K562 (cell line): ENCODE measurements at regions of chr12 and their contacts with region 1.

Region 1: DNA sequence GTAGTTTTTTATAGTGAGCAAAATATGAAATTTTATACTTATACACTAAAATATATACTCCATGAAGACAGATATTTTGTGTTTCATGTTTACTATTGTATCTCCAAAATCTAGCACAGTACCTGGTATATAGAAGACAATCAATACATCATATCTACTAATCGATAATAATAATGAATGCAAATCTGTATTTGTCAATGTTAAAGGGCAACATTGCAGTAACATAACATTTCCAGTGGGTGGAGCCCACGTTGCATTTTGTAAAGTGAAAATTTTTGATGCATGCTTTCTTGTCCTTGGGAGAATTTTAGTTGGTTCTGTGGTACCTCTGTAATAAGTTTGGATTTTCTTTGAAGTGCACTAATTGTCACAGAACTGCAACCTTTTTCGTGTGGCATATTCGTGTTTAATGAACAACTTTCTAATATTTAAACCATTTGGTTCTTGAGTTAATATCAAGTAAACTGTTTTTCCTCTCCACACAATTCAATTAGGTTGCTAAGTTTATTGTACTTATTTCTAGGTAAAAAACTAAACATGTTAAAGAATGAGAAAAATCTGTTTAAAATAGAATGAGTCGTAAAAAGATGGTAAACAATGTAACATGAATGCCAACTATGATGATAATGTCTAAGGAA is 47.4 kb downstream of the AVPR1A start:
- DNase-seq: peak; percentile 9 to 35 (median 23)
- ATAC-seq: no peak
- H3K4me3 ChIP-seq: no peak overlapping the region
- H3K27ac ChIP-seq: no peak overlapping the region
- H3K4me1 ChIP-seq: no peaks in the 10 kb centered on the region
- H3K27me3 ChIP-seq: peaks cover 0 to 5% of the 10 kb centered on the region in 2 experiments; a peak in 1 of 5 replicates
- CTCF ChIP-seq: peak; percentile 50 to 78 (median 67)
- EP300 ChIP-seq: no peak
- POLR2A ChIP-seq: no peak
- RAD21 ChIP-seq: peak; percentile 83 to 86

Region 2: GRCh38 chr12:63079791-63080502 is 23.7 kb before region 1 on chr12:
- CTCF ChIA-PET with region 1: no interaction called
- POLR2A ChIA-PET with region 1: no interaction called
- in situ Hi-C with region 1: no loop called
- intact Hi-C with region 1: no loop called
- DNase-seq: no peak
- ATAC-seq: no peak
- H3K4me3 ChIP-seq: no peak overlapping the region
- H3K27ac ChIP-seq: no peak overlapping the region
- H3K4me1 ChIP-seq: no peaks in the 10 kb centered on the region
- H3K27me3 ChIP-seq: no peaks in the 10 kb centered on the region; a peak in 1 of 5 replicates
- CTCF ChIP-seq: no peak
- EP300 ChIP-seq: no peak
- POLR2A ChIP-seq: no peak
- RAD21 ChIP-seq: no peak

Region 3: GRCh38 chr12:63151623-63152320 is 48.2 kb after region 1 on chr12:
- CTCF ChIA-PET with region 1: no interaction called
- POLR2A ChIA-PET with region 1: no interaction called
- in situ Hi-C with region 1: no loop called
- intact Hi-C with region 1: loop called (anchors 5 kb)
- DNase-seq: peak; percentile 15 to 41 (median 25)
- ATAC-seq: peak; percentile 89
- H3K4me3 ChIP-seq: no peak overlapping the region
- H3K27ac ChIP-seq: no peak overlapping the region
- H3K4me1 ChIP-seq: no peaks in the 10 kb centered on the region
- H3K27me3 ChIP-seq: peaks cover 4 to 26% of the 10 kb centered on the region in 2 experiments; a peak in 4 of 5 replicates
- CTCF ChIP-seq: peak; percentile 45 to 62 (median 52)
- EP300 ChIP-seq: no peak
- POLR2A ChIP-seq: no peak
- RAD21 ChIP-seq: no peak

Region 4: DNA sequence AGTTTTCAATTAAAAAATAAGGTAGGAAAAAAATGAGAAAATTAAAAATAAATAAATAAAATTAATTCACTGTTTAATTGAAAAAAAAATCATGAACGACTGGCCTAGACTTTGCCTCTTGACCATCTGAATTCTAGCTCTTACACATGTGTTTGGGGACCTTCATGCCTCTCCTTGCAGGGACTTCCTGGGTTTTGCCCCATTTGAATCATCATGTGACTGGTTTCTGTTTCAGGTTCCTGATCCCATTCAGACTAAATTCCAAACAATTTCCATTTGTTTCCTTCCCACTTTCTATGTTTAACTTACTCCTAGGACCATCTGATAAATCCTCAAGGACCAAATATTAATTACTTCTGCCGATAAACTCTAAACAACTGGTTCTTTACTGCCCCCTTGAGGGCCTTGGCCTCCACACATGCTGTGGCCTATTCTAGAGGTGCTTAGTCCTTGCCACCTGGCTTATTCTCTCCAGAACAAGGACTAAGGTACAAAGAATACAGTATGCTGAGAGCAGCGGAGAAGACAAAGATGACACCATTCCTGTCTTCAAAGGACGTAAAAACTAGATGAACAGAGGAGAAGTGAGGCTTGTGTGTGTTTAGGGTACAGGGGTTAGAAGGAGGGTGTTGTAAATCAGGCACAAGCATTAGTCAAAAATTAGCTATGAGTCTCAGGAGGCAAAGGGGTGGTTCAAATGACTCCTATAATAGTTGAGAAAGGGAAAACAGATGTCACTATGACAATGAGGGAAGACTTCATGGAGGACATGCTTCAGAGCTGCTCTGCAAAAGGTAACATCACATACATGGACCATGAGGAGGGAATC is 173.1 kb after region 1 on chr12:
- CTCF ChIA-PET with region 1: interaction called, 3 read pairs
- POLR2A ChIA-PET with region 1: no interaction called
- in situ Hi-C with region 1: no loop called
- intact Hi-C with region 1: loop called (anchors 1 kb)
- DNase-seq: peak; percentile 10 to 38 (median 12)
- ATAC-seq: peak; percentile 84
- H3K4me3 ChIP-seq: no peak overlapping the region
- H3K27ac ChIP-seq: no peak overlapping the region
- H3K4me1 ChIP-seq: no peaks in the 10 kb centered on the region
- H3K27me3 ChIP-seq: no peaks in the 10 kb centered on the region
- CTCF ChIP-seq: peak; percentile 34 to 62 (median 54); a peak in 5 of 6 replicates
- EP300 ChIP-seq: no peak
- POLR2A ChIP-seq: no peak
- RAD21 ChIP-seq: peak in 1 of 2 experiments; percentile 45; a peak in 3 of 4 replicates

Region 5: DNA sequence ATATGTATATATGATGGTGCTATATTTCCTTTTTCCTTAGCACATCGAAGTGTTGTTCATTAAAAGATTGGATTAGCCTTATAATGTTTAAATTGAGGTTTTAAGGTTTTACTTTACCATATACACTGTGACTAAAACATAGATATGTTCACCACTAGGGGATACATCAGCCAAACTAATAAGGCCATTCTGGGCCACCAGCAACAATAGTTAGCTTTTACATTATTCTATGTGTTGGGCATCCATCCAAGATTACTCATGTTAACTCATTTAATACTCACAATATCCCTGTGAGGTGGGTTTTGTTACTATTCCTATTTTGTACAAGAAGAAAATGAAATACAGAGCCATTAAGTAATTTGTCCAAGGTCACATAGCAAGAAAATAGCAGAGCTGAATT is 249.9 kb after region 1 on chr12:
- CTCF ChIA-PET with region 1: no interaction called
- POLR2A ChIA-PET with region 1: no interaction called
- in situ Hi-C with region 1: no loop called
- intact Hi-C with region 1: no loop called
- DNase-seq: no peak
- ATAC-seq: no peak
- H3K4me3 ChIP-seq: no peak overlapping the region
- H3K27ac ChIP-seq: no peak overlapping the region
- H3K4me1 ChIP-seq: no peaks in the 10 kb centered on the region
- H3K27me3 ChIP-seq: no peaks in the 10 kb centered on the region
- CTCF ChIP-seq: no peak
- EP300 ChIP-seq: no peak
- POLR2A ChIP-seq: no peak
- RAD21 ChIP-seq: no peak

Region 6: DNA sequence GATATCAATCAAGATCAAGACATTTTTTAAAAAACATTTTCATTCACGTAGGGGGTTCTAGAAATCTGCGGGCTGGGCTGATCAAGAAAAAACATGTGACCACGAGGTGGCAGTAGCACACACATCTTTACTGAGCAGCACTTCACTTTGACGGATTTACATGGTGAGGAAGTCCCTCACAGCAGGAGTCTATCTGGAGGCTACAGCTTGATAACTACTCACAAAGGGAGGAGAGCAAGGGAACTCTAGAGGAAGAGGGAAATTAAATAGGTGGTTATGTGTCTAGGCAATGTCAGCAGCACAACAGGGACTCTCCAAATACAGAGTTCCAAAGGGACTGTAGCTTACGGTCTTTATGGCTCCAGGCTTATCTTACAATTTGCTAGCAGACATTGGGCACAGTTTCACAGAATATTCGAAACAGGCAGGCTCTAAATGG is 316.6 kb after region 1 on chr12:
- CTCF ChIA-PET with region 1: no interaction called
- POLR2A ChIA-PET with region 1: no interaction called
- in situ Hi-C with region 1: no loop called
- intact Hi-C with region 1: loop called (anchors 10 kb)
- DNase-seq: peak; percentile 59 to 81 (median 66)
- ATAC-seq: peak; percentile 97
- H3K4me3 ChIP-seq: no peak overlapping the region
- H3K27ac ChIP-seq: no peak overlapping the region
- H3K4me1 ChIP-seq: no peaks in the 10 kb centered on the region; a peak in 1 of 5 replicates
- H3K27me3 ChIP-seq: no peaks in the 10 kb centered on the region
- CTCF ChIP-seq: peak; percentile 51 to 65 (median 63)
- EP300 ChIP-seq: no peak
- POLR2A ChIP-seq: no peak
- RAD21 ChIP-seq: peak; percentile 42 to 68

Region 7: GRCh38 chr12:63802012-63802608 is 698.5 kb after region 1 on chr12:
- CTCF ChIA-PET with region 1: interaction called, 4 read pairs
- POLR2A ChIA-PET with region 1: no interaction called
- in situ Hi-C with region 1: no loop called
- intact Hi-C with region 1: loop called (anchors 1 kb)
- DNase-seq: peak in 2 of 4 experiments; percentile 9 to 14
- ATAC-seq: no peak
- H3K4me3 ChIP-seq: no peak overlapping the region
- H3K27ac ChIP-seq: no peak overlapping the region
- H3K4me1 ChIP-seq: no peaks in the 10 kb centered on the region
- H3K27me3 ChIP-seq: no peaks in the 10 kb centered on the region
- CTCF ChIP-seq: peak; percentile 32 to 62 (median 46); a peak in 4 of 6 replicates
- EP300 ChIP-seq: no peak
- POLR2A ChIP-seq: no peak
- RAD21 ChIP-seq: peak; percentile 61 to 63